Activated T-helper 2 cell treated with anti-CD3 and anti-CD28 coated beads, Interferon-gamma antibody, Interleukin-2, Interleukin-4, amounts not matched to agents 10 μg/mL and 5 μg/mL and 100 μg/mL, durations not matched to agents 14 hours and 24 hours and 36 hours (primary cell): ENCODE measurements at regions of chr5 and their contacts with region 1.

Region 1: DNA sequence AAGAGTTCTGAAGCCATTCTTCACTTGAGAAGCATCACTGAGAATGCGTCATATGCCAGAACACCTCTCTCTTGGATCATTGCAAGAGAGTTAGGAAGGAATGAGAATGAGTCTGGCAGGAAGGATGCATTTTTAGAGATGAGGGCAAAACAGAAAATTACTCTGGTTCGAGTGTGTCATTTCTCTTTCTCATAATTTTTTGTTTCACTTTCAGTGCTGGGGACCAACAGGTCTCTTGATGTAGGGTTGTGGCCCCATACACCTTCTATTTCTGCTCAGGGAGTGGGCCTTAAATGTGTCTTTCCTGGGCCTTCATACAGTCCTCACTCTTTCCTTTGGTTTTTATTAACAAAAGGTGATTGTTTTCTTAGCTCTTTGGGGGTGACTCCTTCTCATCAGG is 302.4 kb downstream of the NR3C1 start:
- DNase-seq: no peak
- H3K4me3 Mint-ChIP-seq: peak overlapping the region; percentile 52
- H3K27ac Mint-ChIP-seq: peak overlapping the region; percentile 95
- H3K4me1 Mint-ChIP-seq: peaks cover 48% of the 10 kb centered on the region
- H3K27me3 Mint-ChIP-seq: no peaks in the 10 kb centered on the region

Region 2: GRCh38 chr5:143057580-143057999 is 43.5 kb before region 1 on chr5:
- intact Hi-C with region 1: loop called (anchors 1 kb)
- DNase-seq: no peak
- H3K4me3 Mint-ChIP-seq: no peak overlapping the region
- H3K27ac Mint-ChIP-seq: peak overlapping the region; percentile 96
- H3K4me1 Mint-ChIP-seq: peaks cover 67% of the 10 kb centered on the region
- H3K27me3 Mint-ChIP-seq: no peaks in the 10 kb centered on the region

Region 3: GRCh38 chr5:143066556-143067281 is 34.4 kb before region 1 on chr5:
- intact Hi-C with region 1: loop called (anchors 1 kb)
- DNase-seq: no peak
- H3K4me3 Mint-ChIP-seq: no peak overlapping the region
- H3K27ac Mint-ChIP-seq: peak overlapping the region; percentile 90
- H3K4me1 Mint-ChIP-seq: peaks cover 51% of the 10 kb centered on the region
- H3K27me3 Mint-ChIP-seq: no peaks in the 10 kb centered on the region

Region 4: DNA sequence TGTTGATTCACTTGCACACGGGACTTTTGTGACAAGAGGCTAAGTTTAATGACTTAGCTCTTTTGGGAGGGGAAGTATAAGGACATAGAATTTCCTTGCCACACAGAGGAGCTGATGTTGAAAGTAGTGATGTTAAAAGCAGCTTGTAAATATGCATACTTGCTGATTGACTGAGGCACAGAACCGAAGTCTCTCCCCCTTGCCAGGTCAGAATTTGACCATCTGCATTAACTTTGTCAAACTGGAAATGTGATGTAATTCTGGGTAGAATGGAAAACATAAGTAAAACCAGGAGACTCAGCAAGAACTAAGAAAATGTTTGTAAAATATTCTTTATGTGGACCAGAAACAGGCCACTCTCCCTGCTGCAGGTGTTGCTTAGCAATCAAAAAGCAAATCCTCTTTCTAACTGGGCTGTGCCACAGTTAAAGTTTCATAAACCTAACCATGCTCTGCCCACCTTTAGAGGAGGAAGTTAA is 18.2 kb after region 1 on chr5:
- intact Hi-C with region 1: loop called (anchors 1 kb)
- DNase-seq: no peak
- H3K4me3 Mint-ChIP-seq: no peak overlapping the region
- H3K27ac Mint-ChIP-seq: peak overlapping the region; percentile 72
- H3K4me1 Mint-ChIP-seq: peaks cover 57% of the 10 kb centered on the region
- H3K27me3 Mint-ChIP-seq: no peaks in the 10 kb centered on the region

Region 5: DNA sequence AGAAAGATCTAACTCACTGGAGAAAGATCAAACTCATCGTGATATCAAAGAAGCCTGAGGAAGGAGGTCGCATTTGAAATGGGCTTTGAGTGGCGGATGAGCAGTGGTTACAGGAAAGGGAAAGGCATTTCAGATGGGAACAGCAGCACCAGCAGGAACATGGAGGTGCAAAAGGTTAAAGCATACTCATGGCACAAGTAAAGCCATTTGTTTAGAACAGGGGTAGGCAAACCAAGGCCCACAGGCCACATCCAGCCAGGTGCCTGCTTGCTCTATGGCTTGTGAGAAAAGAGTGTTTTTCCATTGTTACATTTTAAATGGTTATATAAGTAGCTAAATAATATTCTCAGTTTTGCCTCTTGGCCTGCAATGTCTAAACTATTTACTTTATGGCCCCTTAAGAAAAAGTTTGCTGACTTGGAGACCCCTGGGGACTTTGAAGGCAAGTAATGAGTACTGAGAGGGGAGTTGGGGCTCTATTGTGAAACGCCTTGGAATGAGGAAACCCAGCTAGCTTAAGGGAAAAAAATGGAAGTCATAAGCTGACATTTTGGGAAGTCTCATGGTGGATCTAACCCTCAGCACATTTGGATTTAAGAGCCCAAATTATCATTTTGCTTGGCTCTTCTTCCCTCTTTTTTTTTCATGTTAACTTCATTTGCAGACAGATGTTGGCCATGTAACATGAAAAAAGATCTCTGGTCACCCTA is 91.2 kb after region 1 on chr5:
- intact Hi-C with region 1: no loop called
- DNase-seq: no peak
- H3K4me3 Mint-ChIP-seq: no peak overlapping the region
- H3K27ac Mint-ChIP-seq: no peak overlapping the region
- H3K4me1 Mint-ChIP-seq: peaks cover 24% of the 10 kb centered on the region
- H3K27me3 Mint-ChIP-seq: no peaks in the 10 kb centered on the region

Region 6: GRCh38 chr5:143222287-143223231 is 121.4 kb after region 1 on chr5:
- intact Hi-C with region 1: loop called (anchors 2 kb)
- DNase-seq: peak; percentile 74
- H3K4me3 Mint-ChIP-seq: peak overlapping the region; percentile 43
- H3K27ac Mint-ChIP-seq: peak overlapping the region; percentile 97
- H3K4me1 Mint-ChIP-seq: peaks cover 82% of the 10 kb centered on the region
- H3K27me3 Mint-ChIP-seq: no peaks in the 10 kb centered on the region